ENCODE measurements at regions of chr2 and their contacts with region 1.

Region 1: DNA sequence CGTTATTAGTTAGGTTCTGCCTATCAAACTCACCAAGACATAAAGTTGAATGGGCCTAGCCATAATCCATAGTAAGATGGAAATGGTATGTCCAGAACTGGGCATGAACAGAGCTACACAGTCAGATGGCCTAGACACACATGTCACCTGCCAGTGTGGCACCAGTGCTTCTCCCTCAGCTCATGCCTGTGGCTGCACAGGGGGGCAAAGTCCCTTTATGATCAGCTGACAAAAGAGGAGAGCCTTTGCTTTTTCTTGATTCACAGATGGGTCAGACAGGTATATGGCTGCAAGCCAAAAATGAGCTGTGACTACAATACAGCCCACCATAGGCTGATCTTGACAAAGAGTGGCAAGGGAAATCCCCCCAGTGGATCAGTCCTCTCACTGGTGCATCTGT is 28.3 kb upstream of the STARD7 start:
- DNase-seq: no peak

Region 2: GRCh38 chr2:96251721-96252292 is 14.9 kb after region 1 on chr2:
- intact Hi-C with region 1: loop called in 1 of 2 experiments (anchors 1 kb)
- DNase-seq: peak; percentile 92

Measured in posterior vena cava (tissue), 2 donors.